ENCODE measurements at regions of chr16 and their contacts with region 1.

Region 1: GRCh38 chr16:31032736-31033708 is at the start of gene STX4:
- DNase-seq: peak; percentile 97
- ATAC-seq: peak; percentile 87
- H3K4me3 ChIP-seq: peak within 1 kb of the TSS; percentile 86
- H3K27ac ChIP-seq: peak within 1 kb of the TSS; percentile 73
- H3K4me1 ChIP-seq: no peaks in the 10 kb centered on the region; the same call in 1 of the 2 replicates
- H3K27me3 ChIP-seq: no peaks in the 10 kb centered on the region
- CTCF ChIP-seq: no peak
- EP300 ChIP-seq: peak; percentile 56 to 79
- POLR2A ChIP-seq: peak; percentile 79
- RAD21 ChIP-seq: no peak
- polyA plus RNA-seq, gene STX4: 3.3 to 8.5 TPM

Region 2: DNA sequence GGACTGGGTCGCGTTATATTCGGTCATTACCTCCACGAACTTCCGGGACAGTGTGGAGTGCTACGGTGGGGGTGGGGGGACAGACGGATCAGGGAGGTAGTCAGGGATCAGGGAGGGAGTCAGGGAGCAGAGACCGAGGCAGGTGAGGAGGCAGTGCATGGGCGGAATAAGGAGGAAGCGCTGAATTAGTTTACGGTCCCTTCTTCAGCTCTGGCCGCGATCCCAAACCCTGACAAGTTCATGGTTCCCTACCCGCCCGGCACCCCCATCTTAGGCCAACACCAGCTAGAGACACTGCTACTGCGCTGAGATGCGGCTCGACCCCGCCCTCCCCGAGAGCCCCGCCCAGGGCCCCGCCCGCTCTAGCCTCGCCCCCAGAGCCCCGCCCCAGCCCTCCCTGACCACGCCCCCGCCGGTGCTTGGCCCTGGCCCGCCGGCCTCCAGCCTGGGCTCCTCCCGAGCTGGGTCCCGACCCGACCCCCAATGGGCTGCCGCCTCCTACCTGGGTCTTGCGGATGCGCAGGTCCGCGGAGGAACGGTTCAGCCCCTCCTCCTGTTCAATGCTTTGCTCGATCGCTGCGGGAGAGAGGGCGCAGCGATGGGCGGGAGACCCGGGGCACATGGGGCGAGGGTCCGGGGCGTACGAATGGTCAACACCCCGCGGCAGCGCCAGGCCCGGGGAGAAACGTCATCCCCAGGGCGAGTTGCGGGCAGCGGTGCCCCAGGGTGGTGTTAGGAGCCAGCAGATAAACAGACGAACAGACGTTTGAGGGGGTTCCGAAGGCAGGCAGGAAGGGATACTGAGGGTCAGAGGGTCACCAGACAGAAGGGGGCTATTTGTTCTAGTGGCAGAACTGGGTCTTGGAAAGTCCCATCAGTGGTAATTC is 35.8 kb before region 1 on chr16:
- CTCF ChIA-PET with region 1: interaction called, 4 read pairs
- POLR2A ChIA-PET with region 1: interaction called, 10 read pairs
- RAD21 ChIA-PET with region 1: no interaction called
- SMC1A ChIA-PET with region 1: interaction called, 3 read pairs
- in situ Hi-C with region 1: no loop called
- intact Hi-C with region 1: no loop called
- DNase-seq: peak; percentile 51
- ATAC-seq: peak; percentile 90
- H3K4me3 ChIP-seq: peak overlapping the region; percentile 97
- H3K27ac ChIP-seq: peak overlapping the region; percentile 82
- H3K4me1 ChIP-seq: peaks cover 17% of the 10 kb centered on the region
- H3K27me3 ChIP-seq: no peaks in the 10 kb centered on the region; a peak in 1 of 4 replicates
- CTCF ChIP-seq: no peak
- EP300 ChIP-seq: no peak
- POLR2A ChIP-seq: peak; percentile 85
- RAD21 ChIP-seq: no peak

Region 3: DNA sequence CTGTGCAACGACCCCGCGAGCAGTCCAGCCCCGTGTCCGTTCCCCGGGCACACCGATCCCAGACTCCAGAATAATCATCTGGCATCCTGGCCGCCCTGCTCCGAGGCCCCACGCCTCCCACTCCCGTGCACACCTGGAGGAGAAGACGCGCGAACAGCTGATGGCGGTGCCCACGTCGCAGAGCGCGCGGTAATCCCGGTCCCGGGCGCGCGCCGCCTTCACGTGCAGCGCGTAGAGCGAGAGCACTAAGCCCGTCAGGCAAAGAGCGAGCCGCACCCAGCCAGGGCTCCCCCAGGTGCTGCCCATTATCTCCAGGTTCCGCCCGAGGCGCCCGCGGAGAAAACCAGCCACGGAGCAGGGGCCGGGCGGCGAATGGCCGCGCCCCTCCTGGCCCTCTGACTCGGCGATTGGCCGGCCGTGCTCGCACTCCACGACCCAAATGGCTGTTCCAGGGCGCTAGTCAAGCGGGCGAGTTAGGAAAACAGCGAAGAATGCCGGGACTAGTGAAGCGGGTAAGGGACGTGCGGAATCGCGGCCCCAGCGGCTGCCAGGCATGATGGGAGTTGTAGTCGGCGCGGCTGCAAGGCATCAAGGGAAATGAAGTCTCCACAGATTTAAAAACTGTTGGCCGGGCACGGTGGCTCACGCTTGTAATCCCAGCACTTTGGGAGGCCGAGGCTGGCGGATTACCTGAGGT is 61.5 kb after region 1 on chr16 and contains the start of gene VKORC1:
- CTCF ChIA-PET with region 1: no interaction called
- POLR2A ChIA-PET with region 1: interaction called, 3 read pairs
- RAD21 ChIA-PET with region 1: no interaction called
- SMC1A ChIA-PET with region 1: no interaction called
- in situ Hi-C with region 1: no loop called
- intact Hi-C with region 1: loop called (anchors 1 kb)
- DNase-seq: peak; percentile 87
- ATAC-seq: peak; percentile 89
- H3K4me3 ChIP-seq: peak within 1 kb of the TSS; percentile 99
- H3K27ac ChIP-seq: peak within 1 kb of the TSS; percentile 81
- H3K4me1 ChIP-seq: peaks cover 8% of the 10 kb centered on the region
- H3K27me3 ChIP-seq: no peaks in the 10 kb centered on the region
- CTCF ChIP-seq: no peak
- EP300 ChIP-seq: no peak
- POLR2A ChIP-seq: peak; percentile 79
- RAD21 ChIP-seq: no peak
- polyA plus RNA-seq, gene VKORC1: 19.8 to 39.0 TPM